Heart left ventricle (tissue), 16 donors: ENCODE measurements at regions of chr2 and their contacts with region 1.

Region 1: GRCh38 chr2:102235491-102235890 is 48.7 kb downstream of the IL1RL2 start:
- DNase-seq: no peak
- ATAC-seq: peak in 2 of 4 donors; percentile 17 to 58
- H3K4me3 ChIP-seq: no peak overlapping the region
- H3K27ac ChIP-seq: no peak overlapping the region
- H3K4me1 ChIP-seq: peaks cover 0 to 15% (median 6%) of the 10 kb centered on the region in 12 donors
- H3K27me3 ChIP-seq: no peaks in the 10 kb centered on the region
- CTCF ChIP-seq: peak in 8 of 12 donors; percentile 4 to 37 (median 20)
- POLR2A ChIP-seq: no peak

Region 2: GRCh38 chr2:101883863-101884262 is 351.6 kb before region 1 on chr2:
- intact Hi-C with region 1: loop called in 7 of 10 experiments (anchors 5 to 10 kb)
- DNase-seq: no peak
- ATAC-seq: peak in 3 of 4 donors; percentile 65 to 79 (median 77)
- H3K4me3 ChIP-seq: no peak overlapping the region
- H3K27ac ChIP-seq: peak overlapping the region in 1 of 12 donors; percentile 25
- H3K4me1 ChIP-seq: peaks cover 0 to 35% (median 17%) of the 10 kb centered on the region in 12 donors
- H3K27me3 ChIP-seq: no peaks in the 10 kb centered on the region
- CTCF ChIP-seq: peak; percentile 33 to 68 (median 54)
- POLR2A ChIP-seq: no peak

Region 3: GRCh38 chr2:102063941-102064678 is 171.4 kb before region 1 on chr2:
- intact Hi-C with region 1: loop called in 1 of 10 experiments (anchors 5 kb)
- DNase-seq: peak; percentile 80 to 95 (median 87)
- ATAC-seq: peak; percentile 85 to 94 (median 92)
- H3K4me3 ChIP-seq: peak overlapping the region in 3 of 12 donors; percentile 11 to 12 (median 11)
- H3K27ac ChIP-seq: peak overlapping the region; percentile 77 to 97 (median 90)
- H3K4me1 ChIP-seq: peaks cover 0 to 79% (median 52%) of the 10 kb centered on the region in 12 donors
- H3K27me3 ChIP-seq: no peaks in the 10 kb centered on the region
- CTCF ChIP-seq: no peak
- POLR2A ChIP-seq: no peak

Region 4: DNA sequence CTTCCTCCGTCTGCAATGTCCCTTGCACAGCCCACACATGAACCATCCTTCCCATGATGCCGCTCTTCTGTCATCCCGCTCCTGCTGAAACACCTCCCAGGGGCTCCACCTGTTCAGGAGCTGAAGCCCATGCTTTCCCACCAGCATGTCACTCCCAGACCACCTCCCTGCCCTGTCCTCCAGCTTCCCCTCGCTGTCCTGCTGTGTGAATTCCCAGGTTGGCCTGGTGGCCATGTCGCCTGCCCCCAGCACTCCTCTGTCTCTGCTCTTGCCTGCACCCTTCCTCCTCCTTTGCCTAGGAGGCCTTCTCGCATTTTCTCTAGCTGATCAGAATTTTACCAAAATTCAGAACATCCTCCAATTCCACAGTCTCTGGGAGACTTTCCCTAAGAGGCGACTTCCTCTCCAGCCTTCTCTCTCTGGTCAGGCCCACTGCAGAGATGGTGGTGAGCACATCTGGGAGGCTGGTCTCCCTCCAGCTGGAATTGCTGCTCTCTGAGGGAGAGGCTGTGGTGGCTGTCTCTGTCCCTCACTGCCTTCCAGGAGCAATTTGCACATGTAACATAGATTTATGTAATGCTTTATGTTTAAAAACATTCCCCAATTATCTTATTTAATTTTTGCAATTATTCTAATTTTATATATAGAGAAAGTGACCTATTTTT is 57.5 kb before region 1 on chr2:
- intact Hi-C with region 1: loop called in 1 of 10 experiments (anchors 5 kb)
- DNase-seq: no peak
- ATAC-seq: peak in 2 of 4 donors; percentile 30 to 41
- H3K4me3 ChIP-seq: no peak overlapping the region
- H3K27ac ChIP-seq: peak overlapping the region in 2 of 12 donors; percentile 12 to 15
- H3K4me1 ChIP-seq: peaks cover 0 to 15% (median 1%) of the 10 kb centered on the region in 12 donors
- H3K27me3 ChIP-seq: peaks cover 0 to 3% (median 0%) of the 10 kb centered on the region in 9 donors
- CTCF ChIP-seq: no peak
- POLR2A ChIP-seq: no peak

Region 5: DNA sequence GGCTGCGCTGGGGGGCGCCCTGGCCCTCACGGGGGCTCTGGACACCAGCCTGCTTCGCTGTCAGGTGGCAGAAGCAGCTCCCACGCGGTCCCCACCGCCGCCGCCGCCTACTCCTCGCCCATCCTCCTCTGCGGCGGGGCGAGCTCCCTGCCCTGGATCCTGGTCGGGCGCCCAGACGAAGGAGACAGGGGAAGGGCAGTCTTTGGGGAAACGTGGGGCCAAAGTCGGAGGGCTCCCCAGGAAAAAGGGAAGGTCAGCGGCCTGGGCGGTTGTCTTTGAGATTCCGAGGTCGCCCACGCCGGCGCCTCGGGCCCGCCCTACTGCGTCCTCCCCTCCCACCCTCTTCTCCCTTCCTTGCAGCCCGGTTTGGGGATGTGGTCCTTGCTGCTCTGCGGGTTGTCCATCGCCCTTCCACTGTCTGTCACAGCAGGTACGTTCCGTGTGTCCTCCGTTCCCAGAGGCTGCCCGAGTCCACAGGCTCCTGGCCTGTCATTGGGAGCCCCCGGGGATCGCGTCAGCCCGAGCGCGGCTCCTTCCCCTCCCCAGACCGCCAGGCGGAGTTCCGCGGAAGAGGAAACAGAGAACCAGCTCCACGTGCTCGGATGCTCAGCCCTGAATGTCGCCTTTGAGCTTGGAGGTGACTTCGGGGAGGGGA is 47.9 kb before region 1 on chr2:
- intact Hi-C with region 1: loop called in 7 of 10 experiments (anchors 2 to 5 kb)
- DNase-seq: peak; percentile 61 to 83 (median 62)
- ATAC-seq: peak; percentile 62 to 92 (median 86)
- H3K4me3 ChIP-seq: peak overlapping the region; percentile 22 to 64 (median 55)
- H3K27ac ChIP-seq: peak overlapping the region in 9 of 12 donors; percentile 23 to 70 (median 54)
- H3K4me1 ChIP-seq: peaks cover 0 to 24% (median 5%) of the 10 kb centered on the region in 12 donors
- H3K27me3 ChIP-seq: peaks cover 0 to 2% (median 0%) of the 10 kb centered on the region in 9 donors
- CTCF ChIP-seq: peak in 9 of 12 donors; percentile 21 to 53 (median 27)
- POLR2A ChIP-seq: peak in 1 of 2 donors; percentile 16